ENCODE measurements at regions of chr1 and their contacts with region 1.

Region 1: DNA sequence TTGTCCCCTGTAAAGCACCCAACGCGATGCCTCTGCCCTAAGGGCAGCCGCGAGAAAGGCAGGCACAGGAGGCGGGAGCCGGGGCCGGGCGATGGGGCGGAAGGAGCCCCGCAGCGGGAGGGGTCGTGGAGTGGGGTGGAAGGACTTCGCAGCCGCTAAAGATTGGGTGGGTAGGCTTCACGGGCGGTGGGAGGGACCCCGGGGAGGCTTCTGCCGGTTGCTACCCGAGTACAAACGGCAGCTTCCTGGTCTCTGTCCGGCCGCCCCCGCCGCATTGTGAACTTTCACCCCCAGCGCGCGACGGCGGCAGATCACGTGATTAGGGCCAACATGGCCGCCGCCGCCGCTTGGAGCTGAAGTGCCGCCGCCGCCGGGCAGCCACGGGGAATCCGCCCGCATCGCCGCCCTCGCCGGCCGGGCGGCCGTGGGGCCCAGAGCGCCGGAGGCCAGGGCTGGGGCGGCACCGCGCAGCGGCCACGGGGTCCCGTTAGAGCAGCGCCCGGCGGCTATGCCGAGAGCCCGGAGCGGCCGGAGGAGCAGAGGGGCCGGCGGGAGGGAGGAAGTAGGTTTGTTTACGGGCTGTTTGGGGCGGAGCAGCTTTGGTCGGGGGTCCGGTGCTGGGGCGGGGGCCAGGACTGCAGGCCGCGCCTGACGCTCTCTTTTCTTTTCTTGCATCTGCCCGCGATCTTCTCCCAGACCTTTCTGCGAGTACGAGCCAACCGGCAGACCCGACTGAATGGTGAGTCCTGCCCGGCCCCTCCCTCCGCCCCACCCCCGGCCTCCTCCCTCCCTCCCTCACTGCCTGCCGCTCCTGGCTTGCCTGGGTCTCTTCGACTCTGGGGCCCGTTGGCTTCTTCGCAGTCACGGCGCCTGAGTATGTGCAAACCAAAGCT is 42.4 kb downstream of the TMEM53 start:
- DNase-seq: peak; percentile 95
- H3K4me3 Mint-ChIP-seq: peak overlapping the region; percentile 91
- H3K27ac Mint-ChIP-seq: peak overlapping the region; percentile 95
- H3K4me1 Mint-ChIP-seq: peaks cover 39% of the 10 kb centered on the region
- H3K27me3 Mint-ChIP-seq: no peaks in the 10 kb centered on the region

Region 2: DNA sequence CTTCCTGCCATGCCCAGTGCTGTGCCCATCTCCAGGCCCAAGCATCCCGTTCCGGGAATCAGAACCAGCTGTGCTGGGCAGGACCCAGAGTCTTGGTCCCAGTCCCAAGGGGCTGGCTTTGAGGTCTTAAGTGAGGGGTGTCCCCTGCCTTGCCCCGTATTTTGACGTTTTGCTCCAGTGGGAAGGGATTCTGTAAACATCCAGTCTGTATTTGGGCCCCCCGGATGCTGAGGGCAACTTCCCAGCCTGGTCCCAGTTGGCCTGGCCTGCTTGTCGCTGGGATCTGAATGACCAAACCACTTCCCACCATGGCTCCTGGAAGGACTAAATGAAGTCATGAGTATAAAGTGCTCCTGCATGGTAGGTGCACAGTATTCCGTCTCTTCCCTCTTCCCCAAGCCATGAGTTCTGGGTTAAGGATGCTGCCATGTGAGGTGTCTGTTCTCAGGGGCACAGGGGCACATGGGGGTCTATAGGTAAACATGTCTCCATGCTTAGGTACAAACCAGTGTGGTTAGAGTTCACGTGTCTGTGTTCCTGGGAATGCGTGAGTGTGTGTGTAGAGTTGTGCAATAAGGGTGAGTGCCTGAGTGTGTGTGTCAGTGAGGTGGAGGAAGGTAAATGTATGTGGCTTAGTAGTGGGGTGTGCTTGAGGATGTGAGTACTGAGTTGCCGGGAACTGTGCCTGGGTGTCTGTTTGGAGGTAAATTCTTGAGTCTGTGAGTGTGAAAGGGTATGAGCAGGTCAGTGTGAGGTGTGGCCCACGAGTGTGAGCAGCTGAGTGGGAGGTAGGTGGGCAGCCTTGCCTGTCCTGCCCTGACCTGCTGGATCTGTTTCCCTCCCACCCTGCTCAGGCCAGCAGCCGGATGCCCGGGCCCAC is 651.4 kb before region 1 on chr1:
- CTCF ChIA-PET with region 1: no interaction called
- intact Hi-C with region 1: no loop called
- DNase-seq: no peak
- H3K4me3 Mint-ChIP-seq: peak overlapping the region; percentile 82
- H3K27ac Mint-ChIP-seq: no peak overlapping the region
- H3K4me1 Mint-ChIP-seq: peaks cover 35% of the 10 kb centered on the region
- H3K27me3 Mint-ChIP-seq: no peaks in the 10 kb centered on the region

Region 3: GRCh38 chr1:44619261-44619900 is 12.5 kb before region 1 on chr1:
- CTCF ChIA-PET with region 1: no interaction called
- intact Hi-C with region 1: no loop called
- DNase-seq: no peak
- H3K4me3 Mint-ChIP-seq: no peak overlapping the region
- H3K27ac Mint-ChIP-seq: no peak overlapping the region
- H3K4me1 Mint-ChIP-seq: no peaks in the 10 kb centered on the region
- H3K27me3 Mint-ChIP-seq: no peaks in the 10 kb centered on the region

Region 4: DNA sequence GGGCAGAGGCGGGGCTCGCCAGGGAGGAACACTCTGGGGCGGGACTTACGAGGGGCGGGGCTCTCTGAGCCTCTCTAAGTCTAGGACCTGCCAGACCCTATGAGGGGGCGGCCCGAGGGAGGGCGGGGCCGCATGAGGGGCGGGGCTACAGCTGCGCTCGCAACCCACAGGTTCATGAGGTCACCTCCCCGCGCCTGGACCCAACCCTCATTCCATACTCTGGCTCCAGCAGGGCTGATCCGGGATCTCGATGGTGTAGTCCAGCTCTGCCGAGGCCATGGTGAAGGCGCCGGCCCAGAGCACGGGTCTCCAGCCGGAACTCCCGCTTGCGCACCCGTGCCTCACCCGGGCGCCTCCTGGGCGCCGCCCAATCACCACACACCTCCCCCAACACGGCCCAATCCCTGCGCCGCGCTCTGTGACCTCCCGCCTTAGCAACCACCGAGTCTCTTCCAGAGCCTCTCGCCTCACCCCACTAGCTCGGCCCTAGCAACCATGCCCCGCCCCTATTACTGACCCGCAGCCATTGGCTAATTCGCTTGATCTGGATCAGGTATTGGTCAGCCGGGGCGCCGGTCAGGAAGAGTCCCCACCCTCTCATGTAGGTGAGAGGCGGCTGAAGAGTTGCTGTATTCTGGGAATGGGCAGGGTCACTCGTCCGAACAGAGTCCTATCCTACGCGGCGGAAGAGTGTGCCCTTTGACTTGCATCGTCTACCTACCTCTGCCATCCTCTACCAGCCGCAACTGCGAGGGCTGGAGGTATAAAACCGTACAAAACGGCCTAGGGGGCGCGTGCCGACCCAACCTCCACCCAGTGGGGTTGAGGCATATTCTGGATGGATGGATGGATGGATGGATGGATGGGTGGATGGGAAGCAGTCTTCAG is 42.5 kb after region 1 on chr1 and contains the starts of genes ARMH1 and TMEM53:
- CTCF ChIA-PET with region 1: no interaction called
- intact Hi-C with region 1: loop called (anchors 1 kb)
- DNase-seq: peak; percentile 99
- H3K4me3 Mint-ChIP-seq: peak within 1 kb of the TSS; percentile 82
- H3K27ac Mint-ChIP-seq: peak within 1 kb of the TSS; percentile 78
- H3K4me1 Mint-ChIP-seq: peaks cover 18% of the 10 kb centered on the region
- H3K27me3 Mint-ChIP-seq: no peaks in the 10 kb centered on the region
- total RNA-seq, gene ARMH1: 143 to 155 TPM
- total RNA-seq, gene TMEM53: 4.5 to 4.9 TPM

Region 5: GRCh38 chr1:44775078-44775929 is 143.4 kb after region 1 on chr1 and contains the start of gene RPS8:
- CTCF ChIA-PET with region 1: no interaction called
- intact Hi-C with region 1: loop called (anchors 1 kb)
- DNase-seq: peak; percentile 94
- H3K4me3 Mint-ChIP-seq: peak within 1 kb of the TSS; percentile 95
- H3K27ac Mint-ChIP-seq: peak within 1 kb of the TSS; percentile 92
- H3K4me1 Mint-ChIP-seq: peaks cover 32% of the 10 kb centered on the region
- H3K27me3 Mint-ChIP-seq: no peaks in the 10 kb centered on the region
- total RNA-seq, gene RPS8: 3,619 to 3,772 TPM